Activated CD4-positive, alpha-beta T cell treated with anti-CD3 and anti-CD28 coated beads, Interleukin-2, amount 10 ng/mL, durations not matched to agents 24 days and 14 days (primary cell): ENCODE measurements at regions of chr2 and their contacts with region 1.

Region 1: GRCh38 chr2:62412347-62412742 is 93.7 kb downstream of the TMEM17 start:
- DNase-seq: no peak
- H3K4me3 Mint-ChIP-seq: no peak overlapping the region
- H3K27ac Mint-ChIP-seq: peak overlapping the region; percentile 59
- H3K4me1 Mint-ChIP-seq: peaks cover 15% of the 10 kb centered on the region
- H3K27me3 Mint-ChIP-seq: no peaks in the 10 kb centered on the region

Region 2: DNA sequence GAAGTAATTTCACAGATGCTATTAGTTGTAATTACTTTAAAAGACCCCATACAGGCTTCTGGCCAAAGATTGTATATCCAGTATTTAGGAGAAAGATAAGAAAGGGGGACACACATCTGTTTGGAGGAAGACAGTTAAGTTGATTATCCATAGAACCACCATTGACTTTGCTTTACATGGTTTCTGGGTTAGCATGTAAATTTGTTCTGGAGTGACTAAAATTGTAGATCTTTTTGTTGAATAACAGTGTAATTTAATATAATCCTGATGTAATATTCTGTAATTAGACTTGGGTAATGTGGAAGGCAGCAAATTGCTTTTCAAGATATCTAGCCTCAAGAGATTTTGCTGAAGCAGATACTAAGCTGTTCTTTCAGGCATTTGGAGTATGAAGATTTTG is 489.6 kb before region 1 on chr2:
- intact Hi-C with region 1: loop called (anchors 1 kb)
- DNase-seq: no peak
- H3K4me3 Mint-ChIP-seq: no peak overlapping the region
- H3K27ac Mint-ChIP-seq: no peak overlapping the region
- H3K4me1 Mint-ChIP-seq: no peaks in the 10 kb centered on the region
- H3K27me3 Mint-ChIP-seq: no peaks in the 10 kb centered on the region

Region 3: GRCh38 chr2:61993444-61994024 is 418.8 kb before region 1 on chr2:
- intact Hi-C with region 1: loop called (anchors 1 kb)
- DNase-seq: peak; percentile 69
- H3K4me3 Mint-ChIP-seq: no peak overlapping the region
- H3K27ac Mint-ChIP-seq: no peak overlapping the region
- H3K4me1 Mint-ChIP-seq: no peaks in the 10 kb centered on the region
- H3K27me3 Mint-ChIP-seq: no peaks in the 10 kb centered on the region

Region 4: GRCh38 chr2:62362561-62362960 is 49.8 kb before region 1 on chr2:
- intact Hi-C with region 1: no loop called
- DNase-seq: no peak
- H3K4me3 Mint-ChIP-seq: no peak overlapping the region
- H3K27ac Mint-ChIP-seq: no peak overlapping the region
- H3K4me1 Mint-ChIP-seq: no peaks in the 10 kb centered on the region
- H3K27me3 Mint-ChIP-seq: no peaks in the 10 kb centered on the region

Region 5: GRCh38 chr2:62435720-62436119 is 23.4 kb after region 1 on chr2:
- intact Hi-C with region 1: no loop called
- DNase-seq: no peak
- H3K4me3 Mint-ChIP-seq: no peak overlapping the region
- H3K27ac Mint-ChIP-seq: no peak overlapping the region
- H3K4me1 Mint-ChIP-seq: no peaks in the 10 kb centered on the region
- H3K27me3 Mint-ChIP-seq: peaks cover 4% of the 10 kb centered on the region

Region 6: GRCh38 chr2:62456721-62457539 is 44.6 kb after region 1 on chr2:
- intact Hi-C with region 1: no loop called
- DNase-seq: peak; percentile 91
- H3K4me3 Mint-ChIP-seq: peak overlapping the region; percentile 48
- H3K27ac Mint-ChIP-seq: no peak overlapping the region
- H3K4me1 Mint-ChIP-seq: no peaks in the 10 kb centered on the region
- H3K27me3 Mint-ChIP-seq: peaks cover 11% of the 10 kb centered on the region